ENCODE measurements at regions of chrX and their contacts with region 1.

Region 1: GRCh38 chrX:318739-319578 is at the start of gene GTPBP6:
- DNase-seq: peak; percentile 99 to 100
- H3K4me3 ChIP-seq: peak within 1 kb of the TSS; percentile 96 to 99
- H3K27ac ChIP-seq: peak within 1 kb of the TSS; percentile 97
- H3K4me1 ChIP-seq: peaks cover 15% of the 10 kb centered on the region
- H3K27me3 ChIP-seq: no peaks in the 10 kb centered on the region
- CTCF ChIP-seq: peak in 1 of 3 experiments; percentile 12
- POLR2A ChIP-seq: peak in 1 of 2 donors; percentile 67
- total RNA-seq, gene GTPBP6: 30.9 TPM

Region 2: GRCh38 chrX:283115-283845 is 35.7 kb before region 1 on chrX:
- intact Hi-C with region 1: no loop called
- DNase-seq: peak in 1 of 2 donors; percentile 92
- H3K4me3 ChIP-seq: peak overlapping the region; percentile 50 to 53
- H3K27ac ChIP-seq: peak overlapping the region; percentile 72
- H3K4me1 ChIP-seq: peaks cover 4% of the 10 kb centered on the region
- H3K27me3 ChIP-seq: no peaks in the 10 kb centered on the region
- CTCF ChIP-seq: no peak
- POLR2A ChIP-seq: no peak

Region 3: DNA sequence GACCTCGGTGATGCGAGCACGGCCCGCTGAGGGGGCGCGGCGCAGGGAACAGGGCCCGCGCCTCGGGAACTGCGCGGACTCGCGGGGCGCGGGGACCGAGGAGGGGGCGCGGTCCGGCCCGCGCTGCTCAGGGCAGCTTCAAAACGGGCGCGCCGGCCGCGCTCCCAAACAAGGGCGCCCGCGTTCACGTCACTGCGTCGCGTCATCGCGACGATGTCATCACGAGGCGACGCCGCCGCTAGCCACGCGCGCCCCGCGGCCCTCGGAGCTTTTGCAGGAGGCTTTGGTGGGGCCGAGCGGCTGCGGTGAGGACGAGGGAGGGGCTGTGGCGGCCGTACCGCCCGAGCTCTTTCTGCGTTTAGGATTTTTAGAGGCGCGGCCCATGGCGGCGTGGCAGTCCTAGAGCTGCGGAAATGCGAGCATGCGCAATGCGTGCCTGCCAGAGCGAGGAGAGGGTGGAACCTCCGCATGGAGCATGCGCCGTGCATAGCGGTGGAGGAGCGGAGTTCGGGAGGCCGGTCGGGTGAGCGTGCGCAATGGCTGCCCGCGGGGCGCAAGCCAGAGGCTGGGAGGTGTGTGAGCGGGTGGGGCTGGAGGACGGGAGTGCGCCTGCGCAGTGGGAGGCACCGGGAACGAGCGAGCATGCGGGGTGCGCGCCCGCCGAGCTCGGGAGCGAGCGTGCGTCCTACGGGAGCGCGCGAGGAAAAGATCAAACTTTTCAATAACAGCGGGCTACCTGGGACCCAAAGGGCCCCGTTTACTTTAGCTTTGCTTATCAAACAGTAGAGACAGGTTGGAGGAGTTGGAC is 68.0 kb after region 1 on chrX and contains the start of gene PPP2R3B:
- intact Hi-C with region 1: loop called (anchors 2 kb)
- DNase-seq: peak in 1 of 2 donors; percentile 98
- H3K4me3 ChIP-seq: peak within 1 kb of the TSS; percentile 66 to 94
- H3K27ac ChIP-seq: peak within 1 kb of the TSS; percentile 97
- H3K4me1 ChIP-seq: peaks cover 9% of the 10 kb centered on the region
- H3K27me3 ChIP-seq: no peaks in the 10 kb centered on the region
- CTCF ChIP-seq: no peak
- POLR2A ChIP-seq: no peak
- total RNA-seq, gene PPP2R3B: 28.5 TPM

Measured in vagina (tissue), 2 donors.